Sigmoid colon (tissue), 7 donors: ENCODE measurements at regions of chr7 and their contacts with region 1.

Region 1: DNA sequence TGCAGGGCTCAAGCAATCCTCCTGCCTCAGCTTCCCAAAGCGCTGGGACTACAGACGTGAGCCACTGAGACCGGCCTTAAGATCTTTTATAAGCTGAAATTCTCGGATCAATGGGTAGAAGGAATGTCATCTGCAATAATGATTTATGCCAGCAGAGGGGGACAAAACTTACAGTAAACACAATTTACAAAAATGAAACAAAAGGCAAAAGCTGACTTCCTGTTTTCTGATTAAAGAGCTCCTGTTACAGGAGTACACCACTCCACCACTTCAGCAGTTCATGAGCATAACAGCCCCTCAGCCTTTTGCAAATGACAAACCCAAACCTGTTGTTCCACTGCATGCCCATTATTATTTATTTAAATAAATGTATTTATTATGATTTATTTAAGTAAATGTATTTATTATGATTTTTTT is 88.5 kb upstream of the ATP6V0A4 start:
- DNase-seq: no peak
- H3K4me3 ChIP-seq: no peak overlapping the region
- H3K27ac ChIP-seq: no peak overlapping the region
- H3K4me1 ChIP-seq: no peaks in the 10 kb centered on the region
- H3K27me3 ChIP-seq: no peaks in the 10 kb centered on the region
- CTCF ChIP-seq: peak in 3 of 4 experiments; percentile 24 to 51 (median 31)
- EP300 ChIP-seq: no peak
- POLR2A ChIP-seq: no peak

Region 2: DNA sequence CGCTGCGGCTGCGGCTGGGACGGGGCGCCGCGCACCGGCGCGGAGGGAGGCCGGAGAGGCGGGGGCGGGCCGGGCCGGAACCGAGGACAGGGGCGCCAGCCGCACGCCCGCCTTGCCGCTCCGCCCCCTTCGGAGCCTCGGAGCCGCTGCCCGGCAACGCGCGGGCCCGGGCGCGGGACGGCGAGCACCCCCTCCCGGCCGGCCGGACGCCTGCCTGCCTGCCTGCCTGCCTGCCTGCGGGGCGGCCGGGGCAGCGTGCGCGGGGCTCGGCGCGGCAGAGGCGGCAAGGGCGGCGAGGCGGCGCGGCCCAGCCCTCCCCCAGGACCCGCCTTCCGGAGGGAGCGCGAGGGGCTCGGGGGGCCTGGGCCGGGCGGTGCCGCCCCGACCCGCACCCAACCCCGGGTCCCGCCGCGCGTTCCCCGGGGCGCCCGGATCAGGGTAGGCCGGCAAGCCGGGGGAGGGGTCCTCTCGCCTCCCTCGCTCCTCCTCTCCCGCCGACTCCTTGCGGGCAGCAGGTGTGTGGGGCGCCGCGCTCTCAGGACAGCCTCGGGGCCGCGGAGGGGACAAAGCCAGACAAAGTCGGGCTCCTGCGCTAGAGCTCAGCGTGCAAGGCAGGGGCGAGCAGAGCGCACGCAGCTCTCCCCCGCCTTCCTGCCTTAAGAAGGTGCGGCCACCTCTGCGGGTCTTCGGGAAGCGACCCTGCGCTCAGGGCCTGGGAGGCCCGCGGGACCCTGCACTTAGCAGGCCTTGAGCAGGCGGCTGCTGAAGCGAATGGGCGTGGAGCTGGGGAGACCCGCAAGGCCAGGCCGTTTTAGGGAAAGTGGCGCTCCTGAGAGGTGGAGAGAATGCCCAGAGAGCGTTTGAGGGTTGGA is 95.1 kb after region 1 on chr7 and contains the start of gene KIAA1549:
- intact Hi-C with region 1: loop called (anchors 5 kb)
- DNase-seq: peak; percentile 70
- H3K4me3 ChIP-seq: peak within 1 kb of the TSS; percentile 43 to 71 (median 56)
- H3K27ac ChIP-seq: peak within 1 kb of the TSS; percentile 45 to 63 (median 52)
- H3K4me1 ChIP-seq: peaks cover 0 to 21% (median 17%) of the 10 kb centered on the region in 4 donors
- H3K27me3 ChIP-seq: no peaks in the 10 kb centered on the region
- CTCF ChIP-seq: no peak
- EP300 ChIP-seq: no peak
- POLR2A ChIP-seq: no peak
- total RNA-seq, gene KIAA1549: 1.1 to 3.0 (median 1.2) TPM